Mammary epithelial cell (primary cell): ENCODE measurements at regions of chr4 and their contacts with region 1.

Region 1: DNA sequence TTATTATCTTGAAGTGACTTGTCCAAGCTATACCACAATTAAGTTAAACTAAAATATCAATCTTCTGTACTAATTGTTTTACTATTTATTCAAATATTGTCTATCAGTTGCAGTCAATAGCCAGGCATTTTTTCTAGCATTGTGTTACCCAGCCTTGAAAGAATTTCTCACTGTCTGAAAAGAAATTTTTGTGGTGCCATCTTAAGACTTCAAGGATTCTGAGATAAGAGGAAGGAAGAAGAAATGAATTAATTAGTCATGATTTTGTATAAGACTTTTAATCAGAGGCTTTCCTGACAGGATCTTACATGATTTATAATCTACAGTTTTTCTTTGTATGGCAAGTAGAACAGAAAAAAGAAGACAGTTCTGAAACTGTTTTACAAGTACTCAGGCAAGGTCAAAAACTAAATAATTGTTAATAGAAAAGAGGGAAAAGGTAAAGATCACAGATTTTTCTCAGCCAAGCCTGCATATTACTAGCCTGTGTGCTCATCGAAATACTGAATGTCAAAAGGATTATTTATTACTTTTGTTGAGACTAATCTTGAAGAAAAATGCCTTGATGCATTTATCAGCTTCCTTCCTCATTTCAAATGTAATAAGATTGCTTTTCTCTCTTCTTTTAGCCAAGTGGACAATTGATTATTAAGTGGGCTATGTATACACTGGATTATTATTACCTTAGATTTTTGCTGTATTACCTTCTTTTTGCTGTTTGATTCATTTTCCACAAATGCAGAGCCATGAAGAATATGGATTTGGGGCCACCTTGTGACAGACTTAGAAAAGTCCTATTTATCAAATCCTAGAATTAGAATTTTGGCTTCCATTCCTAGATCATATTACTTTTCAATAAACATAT is 53.8 kb downstream of the CXCL1 start:
- DNase-seq: peak; percentile 33
- H3K4me3 ChIP-seq: no peak overlapping the region
- H3K27ac ChIP-seq: peak overlapping the region; percentile 3
- H3K4me1 ChIP-seq: peaks cover 10% of the 10 kb centered on the region
- H3K27me3 ChIP-seq: no peaks in the 10 kb centered on the region
- CTCF ChIP-seq: peak; percentile 35 to 53

Region 2: DNA sequence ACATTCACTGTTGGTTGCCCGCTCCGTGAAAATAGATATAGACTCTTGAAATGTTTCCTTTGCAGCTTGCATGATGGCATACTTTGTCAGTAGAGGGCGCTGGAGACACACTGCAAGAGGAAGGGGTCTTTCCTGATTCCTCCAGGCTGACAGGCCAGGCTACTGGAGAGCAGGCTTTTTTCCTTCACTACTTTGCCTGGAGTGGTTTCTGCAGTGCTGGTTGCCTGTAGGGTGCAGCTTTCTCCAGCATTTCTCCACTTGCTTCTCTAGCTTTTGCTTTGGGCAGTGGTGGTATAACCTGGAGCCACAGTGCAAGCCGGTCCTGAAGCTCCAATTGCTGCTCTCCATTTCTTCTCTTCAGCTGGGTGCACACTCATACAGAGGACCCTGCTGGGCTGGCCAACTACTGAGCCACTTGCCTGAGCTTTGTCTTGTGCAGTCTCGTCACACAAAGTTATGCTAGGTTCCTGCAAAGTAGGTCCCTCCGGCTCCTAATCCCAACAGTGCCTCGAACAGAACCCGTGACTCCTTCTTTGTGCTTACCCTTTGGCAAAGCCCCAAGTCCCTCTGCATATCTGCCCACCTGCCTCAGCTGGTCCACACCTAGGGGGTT is 349.1 kb before region 1 on chr4:
- CTCF ChIA-PET with region 1: no interaction called
- dilution Hi-C with region 1: no loop called
- in situ Hi-C with region 1: no loop called
- intact Hi-C with region 1: loop called (anchors 5 kb)
- DNase-seq: peak; percentile 52
- H3K4me3 ChIP-seq: no peak overlapping the region
- H3K27ac ChIP-seq: no peak overlapping the region
- H3K4me1 ChIP-seq: peaks cover 5% of the 10 kb centered on the region
- H3K27me3 ChIP-seq: no peaks in the 10 kb centered on the region
- CTCF ChIP-seq: peak; percentile 89

Region 3: GRCh38 chr4:74109116-74109869 is 186.3 kb after region 1 on chr4:
- CTCF ChIA-PET with region 1: interaction called, 5 read pairs
- dilution Hi-C with region 1: no loop called
- in situ Hi-C with region 1: loop called in 1 of 2 experiments (anchors 25 kb)
- intact Hi-C with region 1: no loop called
- DNase-seq: peak; percentile 98
- H3K4me3 ChIP-seq: peak overlapping the region in 2 of 3 experiments; percentile 5 to 15
- H3K27ac ChIP-seq: peak overlapping the region; percentile 99
- H3K4me1 ChIP-seq: peaks cover 65% of the 10 kb centered on the region
- H3K27me3 ChIP-seq: no peaks in the 10 kb centered on the region
- CTCF ChIP-seq: no peak